Activated naive CD4-positive, alpha-beta T cell treated with anti-CD3 and anti-CD28 coated beads for 36 hours (primary cell): ENCODE measurements at regions of chr10 and their contacts with region 1.

Region 1: DNA sequence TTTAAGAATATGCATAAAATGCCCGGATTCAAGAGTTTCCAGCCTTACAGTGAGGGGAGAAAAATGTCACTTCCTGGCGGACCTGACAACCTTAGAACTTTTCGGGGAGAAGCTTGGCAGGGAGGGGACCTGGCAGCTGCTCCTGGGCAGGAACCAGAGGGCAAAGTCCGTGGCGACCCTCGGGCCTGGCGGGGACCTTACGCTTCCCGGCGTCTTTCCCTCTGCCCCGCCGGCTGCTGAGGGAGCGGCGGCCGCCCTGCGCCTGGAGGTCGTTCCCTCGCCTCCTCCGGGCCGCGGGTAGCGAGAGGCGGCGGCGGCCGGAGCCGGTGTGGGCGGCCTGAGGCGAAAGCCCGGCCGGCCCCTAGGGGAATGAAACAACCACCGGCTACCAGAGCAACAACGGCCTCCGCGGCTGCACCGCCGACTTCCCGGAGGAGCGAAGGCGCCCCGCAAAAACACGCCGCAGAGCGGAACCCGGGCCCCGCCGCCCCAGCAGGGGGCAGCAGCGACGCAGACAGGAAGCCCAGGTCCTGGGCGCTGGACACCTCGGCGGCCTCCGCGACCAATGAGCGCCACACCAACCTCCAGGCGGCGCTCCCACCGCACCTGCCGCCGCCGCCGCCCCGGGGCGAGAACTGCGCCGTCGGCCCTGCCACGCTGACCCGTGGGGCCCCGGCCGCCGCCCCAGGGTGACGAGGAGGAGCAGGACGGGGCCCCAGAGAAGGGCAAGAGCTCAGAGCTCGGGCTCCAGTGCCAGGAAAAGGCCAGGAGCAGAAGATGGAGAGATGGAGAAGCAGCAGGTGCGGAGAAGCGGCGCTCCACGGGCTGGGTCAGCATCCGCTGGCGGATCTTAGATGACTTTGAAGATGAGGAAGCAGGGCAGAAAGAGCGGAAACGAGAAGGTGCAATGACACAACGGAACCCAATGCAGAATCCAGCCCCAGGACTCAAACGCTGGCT is 10.5 kb upstream of the ACSM6 start:
- DNase-seq: peak; percentile 74
- H3K4me3 Mint-ChIP-seq: peak overlapping the region; percentile 61
- H3K27ac Mint-ChIP-seq: no peak overlapping the region
- H3K4me1 Mint-ChIP-seq: peaks cover 3% of the 10 kb centered on the region
- H3K27me3 Mint-ChIP-seq: peaks cover 29% of the 10 kb centered on the region

Region 2: DNA sequence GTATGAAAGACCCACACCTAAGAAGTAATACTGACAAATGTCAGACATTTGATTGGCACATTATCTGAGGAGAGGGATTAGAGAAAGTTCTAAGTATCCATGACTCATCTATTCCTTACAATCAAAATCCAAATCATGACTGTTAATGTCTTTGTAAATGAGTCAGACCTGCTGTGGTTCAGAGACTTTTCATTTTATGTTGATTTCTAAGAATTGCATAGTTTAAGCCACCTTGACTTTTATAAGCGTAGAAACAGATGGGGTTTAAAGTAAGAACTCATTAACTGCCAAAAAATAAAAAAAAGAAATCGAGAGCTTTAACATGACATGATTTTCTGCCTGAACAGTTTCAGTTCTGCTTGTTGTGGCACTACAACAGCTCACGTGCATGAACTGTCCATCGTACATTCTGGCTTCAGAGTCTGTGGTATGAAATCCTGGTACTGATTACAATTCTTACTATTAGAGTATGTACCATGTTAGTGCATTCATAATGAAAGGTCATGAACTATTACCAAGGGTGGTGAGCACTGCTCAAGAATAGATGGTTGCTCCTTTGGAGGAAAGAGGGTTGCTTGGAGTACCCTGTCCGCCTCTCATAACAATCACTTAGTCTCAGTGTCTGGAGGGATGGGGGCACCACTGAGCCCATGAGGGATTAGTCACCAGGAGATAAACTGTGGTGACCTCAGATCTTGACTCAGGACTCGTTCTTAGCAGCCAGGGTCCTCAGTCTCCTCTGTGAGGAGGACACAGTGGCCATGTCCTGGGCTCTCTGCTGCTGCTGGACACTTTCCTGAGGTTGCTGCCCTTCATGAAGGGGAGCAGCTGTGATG is 52.7 kb after region 1 on chr10:
- CTCF ChIA-PET with region 1: interaction called, 3 read pairs
- intact Hi-C with region 1: loop called (anchors 2 kb)
- DNase-seq: peak; percentile 26
- H3K4me3 Mint-ChIP-seq: no peak overlapping the region
- H3K27ac Mint-ChIP-seq: peak overlapping the region; percentile 75
- H3K4me1 Mint-ChIP-seq: peaks cover 19% of the 10 kb centered on the region
- H3K27me3 Mint-ChIP-seq: peaks cover 20% of the 10 kb centered on the region